Gastrocnemius medialis (tissue), 4 donors: ENCODE measurements at regions of chr1 and their contacts with region 1.

Region 1: GRCh38 chr1:220353229-220354012 is 81.2 kb upstream of the RAB3GAP2 start:
- DNase-seq: no peak
- ATAC-seq: no peak
- H3K4me3 ChIP-seq: no peak overlapping the region
- H3K27ac ChIP-seq: no peak overlapping the region
- H3K4me1 ChIP-seq: peaks cover 9 to 12% of the 10 kb centered on the region in 2 donors
- H3K27me3 ChIP-seq: no peaks in the 10 kb centered on the region
- CTCF ChIP-seq: no peak
- POLR2A ChIP-seq: no peak

Region 2: DNA sequence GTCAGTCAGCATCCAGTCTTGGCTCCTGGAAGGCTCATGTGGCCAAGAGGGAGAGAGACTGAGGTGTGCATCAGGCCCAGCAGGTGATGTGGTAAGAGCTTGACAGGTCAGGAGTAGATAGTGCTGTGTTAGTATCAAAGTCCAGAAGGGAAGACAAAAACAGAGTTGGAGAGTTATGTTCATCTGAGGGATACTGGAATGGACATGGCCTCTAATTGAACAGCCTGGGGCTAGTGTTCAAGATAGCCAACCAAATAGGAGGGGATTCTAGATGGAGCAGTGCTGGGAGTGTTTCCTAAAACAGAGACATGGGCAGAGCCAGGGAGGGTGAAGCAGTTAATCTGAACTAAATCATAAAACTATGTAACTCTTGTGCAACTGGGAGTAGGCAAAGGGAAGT is 53.8 kb after region 1 on chr1:
- in situ Hi-C with region 1: no loop called
- intact Hi-C with region 1: loop called (anchors 2 kb)
- DNase-seq: no peak
- ATAC-seq: no peak
- H3K4me3 ChIP-seq: no peak overlapping the region
- H3K27ac ChIP-seq: no peak overlapping the region
- H3K4me1 ChIP-seq: peaks cover 0 to 9% of the 10 kb centered on the region in 2 donors
- H3K27me3 ChIP-seq: no peaks in the 10 kb centered on the region
- CTCF ChIP-seq: no peak
- POLR2A ChIP-seq: no peak